ENCODE measurements at regions of chr7 and their contacts with region 1.

Region 1: GRCh38 chr7:121994625-121995410 is 121.9 kb downstream of the PTPRZ1 start:
- DNase-seq: peak; percentile 53 to 73 (median 62)
- ATAC-seq: peak; percentile 97
- H3K4me3 ChIP-seq: no peak overlapping the region
- H3K27ac ChIP-seq: no peak overlapping the region
- H3K4me1 ChIP-seq: no peaks in the 10 kb centered on the region
- H3K27me3 ChIP-seq: no peaks in the 10 kb centered on the region
- CTCF ChIP-seq: peak; percentile 65 to 78 (median 69)
- EP300 ChIP-seq: no peak
- POLR2A ChIP-seq: no peak
- RAD21 ChIP-seq: peak; percentile 69 to 82

Region 2: GRCh38 chr7:121113288-121113687 is 881.5 kb before region 1 on chr7:
- CTCF ChIA-PET with region 1: no interaction called
- POLR2A ChIA-PET with region 1: no interaction called
- in situ Hi-C with region 1: no loop called
- intact Hi-C with region 1: loop called (anchors 10 kb)
- DNase-seq: no peak
- ATAC-seq: no peak
- H3K4me3 ChIP-seq: no peak overlapping the region
- H3K27ac ChIP-seq: no peak overlapping the region
- H3K4me1 ChIP-seq: no peaks in the 10 kb centered on the region
- H3K27me3 ChIP-seq: no peaks in the 10 kb centered on the region
- CTCF ChIP-seq: no peak
- EP300 ChIP-seq: no peak
- POLR2A ChIP-seq: no peak; the same call in 1 of the 2 replicates
- RAD21 ChIP-seq: no peak

Region 3: GRCh38 chr7:121329191-121330052 is 665.4 kb before region 1 on chr7:
- CTCF ChIA-PET with region 1: no interaction called
- POLR2A ChIA-PET with region 1: no interaction called
- in situ Hi-C with region 1: no loop called
- intact Hi-C with region 1: loop called (anchors 10 kb)
- DNase-seq: no peak
- ATAC-seq: peak; percentile 36
- H3K4me3 ChIP-seq: no peak overlapping the region
- H3K27ac ChIP-seq: no peak overlapping the region
- H3K4me1 ChIP-seq: peaks cover 0 to 22% of the 10 kb centered on the region in 2 experiments; a peak in 4 of 5 replicates
- H3K27me3 ChIP-seq: peaks cover 45 to 46% of the 10 kb centered on the region in 2 experiments
- CTCF ChIP-seq: no peak
- EP300 ChIP-seq: no peak
- POLR2A ChIP-seq: no peak
- RAD21 ChIP-seq: no peak

Region 4: GRCh38 chr7:121366852-121367431 is 627.9 kb before region 1 on chr7:
- CTCF ChIA-PET with region 1: interaction called, 21 read pairs
- POLR2A ChIA-PET with region 1: interaction called, 4 read pairs
- in situ Hi-C with region 1: loop called (anchors 25 kb)
- intact Hi-C with region 1: loop called (anchors 2 kb)
- DNase-seq: peak; percentile 43 to 60 (median 51)
- ATAC-seq: peak; percentile 77
- H3K4me3 ChIP-seq: no peak overlapping the region
- H3K27ac ChIP-seq: no peak overlapping the region
- H3K4me1 ChIP-seq: no peaks in the 10 kb centered on the region
- H3K27me3 ChIP-seq: no peaks in the 10 kb centered on the region
- CTCF ChIP-seq: peak; percentile 64 to 95 (median 74); a peak in 5 of 6 replicates
- EP300 ChIP-seq: no peak
- POLR2A ChIP-seq: no peak
- RAD21 ChIP-seq: peak; percentile 96 to 97

Region 5: GRCh38 chr7:121547544-121548092 is 447.2 kb before region 1 on chr7:
- CTCF ChIA-PET with region 1: interaction called, 3 read pairs
- POLR2A ChIA-PET with region 1: no interaction called
- in situ Hi-C with region 1: no loop called
- intact Hi-C with region 1: loop called (anchors 2 kb)
- DNase-seq: peak; percentile 62 to 77 (median 72)
- ATAC-seq: peak; percentile 95
- H3K4me3 ChIP-seq: no peak overlapping the region
- H3K27ac ChIP-seq: no peak overlapping the region
- H3K4me1 ChIP-seq: no peaks in the 10 kb centered on the region
- H3K27me3 ChIP-seq: no peaks in the 10 kb centered on the region
- CTCF ChIP-seq: peak; percentile 70 to 95 (median 77)
- EP300 ChIP-seq: no peak
- POLR2A ChIP-seq: no peak
- RAD21 ChIP-seq: peak; percentile 99 to 100

Region 6: GRCh38 chr7:121681700-121682099 is 313.1 kb before region 1 on chr7:
- CTCF ChIA-PET with region 1: no interaction called
- POLR2A ChIA-PET with region 1: no interaction called
- in situ Hi-C with region 1: no loop called
- intact Hi-C with region 1: no loop called
- DNase-seq: no peak
- ATAC-seq: no peak
- H3K4me3 ChIP-seq: no peak overlapping the region
- H3K27ac ChIP-seq: no peak overlapping the region
- H3K4me1 ChIP-seq: no peaks in the 10 kb centered on the region
- H3K27me3 ChIP-seq: no peaks in the 10 kb centered on the region
- CTCF ChIP-seq: no peak
- EP300 ChIP-seq: no peak
- POLR2A ChIP-seq: no peak
- RAD21 ChIP-seq: no peak

Region 7: GRCh38 chr7:121752706-121753105 is 242.1 kb before region 1 on chr7:
- CTCF ChIA-PET with region 1: no interaction called
- POLR2A ChIA-PET with region 1: no interaction called
- in situ Hi-C with region 1: no loop called
- intact Hi-C with region 1: loop called (anchors 5 kb)
- DNase-seq: no peak
- ATAC-seq: no peak
- H3K4me3 ChIP-seq: no peak overlapping the region
- H3K27ac ChIP-seq: no peak overlapping the region
- H3K4me1 ChIP-seq: no peaks in the 10 kb centered on the region
- H3K27me3 ChIP-seq: no peaks in the 10 kb centered on the region
- CTCF ChIP-seq: peak in 2 of 3 experiments; percentile 20 to 25; a peak in 1 of 6 replicates
- EP300 ChIP-seq: no peak
- POLR2A ChIP-seq: no peak
- RAD21 ChIP-seq: peak in 1 of 2 experiments; percentile 9; a peak in 1 of 4 replicates

Region 8: DNA sequence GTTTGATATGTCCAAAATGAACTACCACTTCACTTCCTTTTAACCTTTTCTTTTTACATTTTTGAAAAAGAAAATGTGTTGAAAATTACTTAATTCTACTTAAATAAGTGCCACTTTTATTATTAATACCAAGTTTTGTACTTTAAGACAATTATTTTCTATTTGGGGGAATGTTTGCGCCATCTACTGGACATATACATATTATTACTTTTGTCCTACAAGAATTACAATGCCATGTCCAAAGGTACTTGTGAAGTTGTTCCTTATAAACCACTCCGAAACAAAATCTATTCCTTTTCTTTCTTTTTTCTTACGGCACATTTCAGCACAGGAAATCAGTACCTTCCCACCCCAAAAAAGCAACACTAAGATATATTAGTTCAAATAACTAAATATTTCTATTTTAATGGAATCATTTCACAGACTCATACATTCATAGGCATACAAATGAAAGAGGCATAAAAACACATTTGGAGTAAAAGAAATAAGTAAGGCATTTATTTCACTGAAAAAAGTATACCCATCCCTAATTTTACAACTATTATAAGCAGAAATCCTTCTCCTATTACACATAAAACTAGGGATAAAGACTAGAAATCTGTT is 534.2 kb after region 1 on chr7:
- CTCF ChIA-PET with region 1: no interaction called
- POLR2A ChIA-PET with region 1: no interaction called
- in situ Hi-C with region 1: no loop called
- intact Hi-C with region 1: loop called (anchors 5 kb)
- DNase-seq: peak; percentile 24 to 45 (median 33)
- ATAC-seq: 0 out of 3 replicates have a peak, but pooled peaks have one; percentile 36
- H3K4me3 ChIP-seq: no peak overlapping the region
- H3K27ac ChIP-seq: no peak overlapping the region
- H3K4me1 ChIP-seq: no peaks in the 10 kb centered on the region
- H3K27me3 ChIP-seq: no peaks in the 10 kb centered on the region
- CTCF ChIP-seq: peak in 2 of 3 experiments; percentile 7 to 55; a peak in 3 of 6 replicates
- EP300 ChIP-seq: no peak
- POLR2A ChIP-seq: no peak
- RAD21 ChIP-seq: peak; percentile 48 to 59